ENCODE measurements at regions of chr7 and their contacts with region 1.

Region 1: DNA sequence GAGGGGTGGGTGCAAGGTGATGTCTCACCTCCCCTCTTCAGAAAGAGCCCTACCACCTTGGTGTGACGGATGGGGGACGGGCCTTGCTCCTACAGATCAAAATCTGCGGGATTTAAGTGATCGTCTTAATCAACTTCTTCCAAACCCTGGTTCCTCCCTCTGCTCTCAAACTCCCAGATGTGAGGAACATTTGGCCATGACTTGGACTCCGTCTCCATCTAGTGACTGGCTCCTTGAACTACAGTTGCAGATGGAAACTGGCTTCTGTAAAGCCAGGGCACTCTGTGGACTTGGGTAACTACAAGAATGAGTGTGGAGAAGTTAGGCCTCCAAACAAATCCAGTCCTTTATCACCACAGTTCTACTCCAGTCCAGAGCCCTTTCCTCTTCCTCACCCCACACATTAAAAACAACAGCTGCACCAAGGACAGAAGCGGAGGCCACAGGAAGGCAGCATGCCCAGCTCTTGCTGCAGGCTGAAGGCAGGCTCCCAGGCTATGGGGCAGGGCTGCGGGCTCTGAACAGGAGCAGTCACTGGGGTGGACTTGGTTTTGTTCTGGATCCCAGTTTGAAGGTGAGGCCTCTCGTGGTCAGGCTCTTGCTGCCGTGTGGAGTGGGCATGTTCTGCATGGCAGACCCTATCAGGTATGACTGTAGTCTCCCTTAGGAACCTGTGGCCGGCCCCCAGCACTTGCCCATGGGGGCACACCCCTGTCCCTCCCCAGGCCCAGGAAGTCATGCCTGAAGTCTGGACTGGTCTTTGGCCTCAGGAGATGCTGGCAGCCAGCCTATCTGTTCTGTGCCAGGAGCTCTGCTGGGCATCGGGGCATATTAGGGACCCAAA is 79.4 kb downstream of the VWC2 start:
- DNase-seq: no peak

Region 2: DNA sequence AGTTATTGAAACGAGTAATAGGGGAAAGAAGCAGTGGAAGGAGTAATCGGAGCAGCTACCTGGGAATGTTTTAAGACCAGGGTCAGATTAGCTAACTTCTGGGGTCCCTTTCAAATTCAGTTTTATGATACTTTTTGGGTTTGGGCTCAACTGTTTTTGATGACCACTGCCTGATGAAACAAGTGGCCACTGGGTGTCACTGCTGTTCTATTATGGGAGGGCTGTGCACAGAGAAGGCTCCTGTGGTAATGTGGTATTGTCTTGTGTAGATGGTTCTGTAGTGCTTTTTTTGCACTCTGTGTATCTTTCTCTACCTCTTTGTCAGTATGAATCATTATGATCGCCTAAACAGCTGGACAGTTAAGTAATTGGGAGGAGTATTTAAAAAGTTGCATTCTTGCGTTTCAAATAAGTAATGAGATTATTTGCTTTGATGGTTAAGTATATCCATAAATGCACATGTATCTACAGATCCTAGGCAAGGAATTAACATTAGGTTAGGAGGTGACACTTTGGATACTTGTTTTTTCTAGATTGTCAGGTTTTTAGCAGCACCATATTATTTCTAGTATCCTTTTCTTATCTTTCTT is 1553.2 kb before region 1 on chr7:
- intact Hi-C with region 1: loop called (anchors 10 kb)
- DNase-seq: no peak

Region 3: GRCh38 chr7:49001610-49002033 is 851.2 kb before region 1 on chr7:
- intact Hi-C with region 1: loop called (anchors 10 kb)
- DNase-seq: no peak

Region 4: GRCh38 chr7:49776994-49777393 is 75.8 kb before region 1 on chr7:
- intact Hi-C with region 1: loop called (anchors 5 kb)
- DNase-seq: no peak

Region 5: GRCh38 chr7:49787980-49788379 is 64.9 kb before region 1 on chr7:
- intact Hi-C with region 1: no loop called
- DNase-seq: no peak

Region 6: DNA sequence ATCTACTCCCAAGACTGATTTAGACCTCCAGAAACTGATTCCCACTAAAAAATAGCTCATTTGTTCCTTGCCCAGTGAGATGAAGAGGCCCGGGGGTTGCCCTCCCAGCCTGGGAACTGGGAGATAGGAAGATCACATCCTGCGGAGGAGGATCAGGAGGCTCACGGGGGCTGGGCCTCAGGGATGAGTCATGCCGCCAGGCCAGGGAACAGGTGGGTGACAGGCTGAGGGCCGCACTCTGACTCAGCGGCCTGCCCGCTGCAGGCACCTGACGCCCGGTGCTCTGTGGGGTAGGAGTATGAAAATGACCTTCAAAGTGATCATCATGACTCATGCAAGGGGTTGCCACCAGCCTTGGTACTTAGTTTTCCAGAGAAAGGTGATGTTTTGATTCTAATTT is 344.7 kb after region 1 on chr7:
- intact Hi-C with region 1: no loop called
- DNase-seq: no peak